ENCODE measurements at regions of chr10 and their contacts with region 1.

Region 1: GRCh38 chr10:86899670-86900276 is 57.6 kb downstream of the MMRN2 start:
- DNase-seq: peak; percentile 58
- ATAC-seq: no peak
- H3K4me3 Mint-ChIP-seq: no peak overlapping the region
- H3K27ac Mint-ChIP-seq: no peak overlapping the region
- H3K4me1 Mint-ChIP-seq: no peaks in the 10 kb centered on the region
- H3K27me3 Mint-ChIP-seq: no peaks in the 10 kb centered on the region

Region 2: GRCh38 chr10:86688398-86688921 is 211.3 kb before region 1 on chr10:
- CTCF ChIA-PET with region 1: interaction called, 21 read pairs
- POLR2A ChIA-PET with region 1: no interaction called
- DNase-seq: peak; percentile 69
- ATAC-seq: peak; percentile 86
- H3K4me3 Mint-ChIP-seq: no peak overlapping the region
- H3K27ac Mint-ChIP-seq: no peak overlapping the region
- H3K4me1 Mint-ChIP-seq: peaks cover 6% of the 10 kb centered on the region
- H3K27me3 Mint-ChIP-seq: no peaks in the 10 kb centered on the region

Region 3: DNA sequence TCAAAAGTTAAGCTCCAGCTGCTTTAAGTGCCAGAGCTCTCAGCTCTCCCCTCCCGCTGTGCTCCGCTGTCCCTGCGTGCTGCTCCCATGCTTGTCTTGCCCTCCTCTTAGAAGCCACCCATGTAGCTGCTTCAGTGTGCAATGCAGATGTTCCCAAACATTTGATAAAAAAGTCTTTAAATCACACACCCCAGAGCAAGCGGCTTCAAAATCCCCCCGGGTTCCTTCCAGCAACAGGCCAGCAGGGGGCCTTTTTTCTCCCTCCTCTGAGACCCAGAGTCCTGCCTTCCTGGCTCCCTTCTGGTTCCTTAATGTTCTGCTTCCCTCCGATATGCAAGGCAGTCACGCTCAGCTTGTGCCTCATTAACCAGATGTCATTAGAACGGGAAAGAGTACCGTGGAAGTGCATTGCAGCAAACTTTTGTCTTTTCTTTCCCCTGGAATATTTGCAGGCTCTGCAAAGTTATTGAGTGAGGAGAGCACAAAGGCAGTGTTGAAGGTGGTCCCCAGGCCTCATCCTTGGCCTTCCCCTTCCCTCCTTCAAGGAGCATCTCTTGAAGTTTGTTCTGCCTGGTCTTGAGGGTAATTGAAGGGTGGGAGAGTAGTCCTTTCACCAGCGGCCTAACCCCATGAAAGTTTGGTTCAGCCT is 205.9 kb before region 1 on chr10:
- CTCF ChIA-PET with region 1: interaction called, 21 read pairs
- POLR2A ChIA-PET with region 1: no interaction called
- DNase-seq: peak; percentile 55
- ATAC-seq: peak; percentile 69
- H3K4me3 Mint-ChIP-seq: no peak overlapping the region
- H3K27ac Mint-ChIP-seq: no peak overlapping the region
- H3K4me1 Mint-ChIP-seq: peaks cover under 1% of the 10 kb centered on the region
- H3K27me3 Mint-ChIP-seq: peaks cover 5% of the 10 kb centered on the region

Region 4: GRCh38 chr10:86888585-86889381 is 11.0 kb before region 1 on chr10:
- CTCF ChIA-PET with region 1: interaction called, 11 read pairs
- POLR2A ChIA-PET with region 1: no interaction called
- DNase-seq: no peak
- ATAC-seq: peak; percentile 53
- H3K4me3 Mint-ChIP-seq: no peak overlapping the region
- H3K27ac Mint-ChIP-seq: no peak overlapping the region
- H3K4me1 Mint-ChIP-seq: peaks cover 6% of the 10 kb centered on the region
- H3K27me3 Mint-ChIP-seq: no peaks in the 10 kb centered on the region

Measured in activated CD8-positive, alpha-beta T cell treated with anti-CD3 and anti-CD28 coated beads, Interleukin-2, amount 10 ng/mL, durations not matched to agents 7 days and 5 days (primary cell).